Posterior vena cava (tissue), 2 donors: ENCODE measurements at regions of chr6 and their contacts with region 1.

Region 1: GRCh38 chr6:168699631-168700295 is 258.8 kb downstream of the SMOC2 start:
- DNase-seq: peak; percentile 80

Region 2: DNA sequence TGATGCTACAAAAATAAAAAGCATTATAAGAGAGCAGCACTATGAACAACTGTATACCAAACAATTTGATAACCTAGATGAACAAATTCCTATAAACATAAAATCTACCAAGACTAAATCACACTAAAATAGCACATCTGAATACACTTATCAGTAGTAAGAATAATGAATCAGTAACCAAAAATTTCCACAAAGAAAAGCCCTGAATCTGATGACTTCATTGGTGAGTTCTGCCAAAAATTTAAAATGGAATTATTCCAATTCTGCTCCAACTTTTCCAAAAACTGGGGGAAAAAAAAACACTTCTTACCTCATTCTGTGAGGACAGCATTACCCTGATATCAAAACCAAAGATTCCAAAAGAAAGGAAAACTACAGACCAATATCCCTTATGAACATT is 795.8 kb after region 1 on chr6:
- intact Hi-C with region 1: loop called in 1 of 2 experiments (anchors 5 kb)
- DNase-seq: no peak